Aorta (tissue), 5 donors: ENCODE measurements at regions of chr13 and their contacts with region 1.

Region 1: DNA sequence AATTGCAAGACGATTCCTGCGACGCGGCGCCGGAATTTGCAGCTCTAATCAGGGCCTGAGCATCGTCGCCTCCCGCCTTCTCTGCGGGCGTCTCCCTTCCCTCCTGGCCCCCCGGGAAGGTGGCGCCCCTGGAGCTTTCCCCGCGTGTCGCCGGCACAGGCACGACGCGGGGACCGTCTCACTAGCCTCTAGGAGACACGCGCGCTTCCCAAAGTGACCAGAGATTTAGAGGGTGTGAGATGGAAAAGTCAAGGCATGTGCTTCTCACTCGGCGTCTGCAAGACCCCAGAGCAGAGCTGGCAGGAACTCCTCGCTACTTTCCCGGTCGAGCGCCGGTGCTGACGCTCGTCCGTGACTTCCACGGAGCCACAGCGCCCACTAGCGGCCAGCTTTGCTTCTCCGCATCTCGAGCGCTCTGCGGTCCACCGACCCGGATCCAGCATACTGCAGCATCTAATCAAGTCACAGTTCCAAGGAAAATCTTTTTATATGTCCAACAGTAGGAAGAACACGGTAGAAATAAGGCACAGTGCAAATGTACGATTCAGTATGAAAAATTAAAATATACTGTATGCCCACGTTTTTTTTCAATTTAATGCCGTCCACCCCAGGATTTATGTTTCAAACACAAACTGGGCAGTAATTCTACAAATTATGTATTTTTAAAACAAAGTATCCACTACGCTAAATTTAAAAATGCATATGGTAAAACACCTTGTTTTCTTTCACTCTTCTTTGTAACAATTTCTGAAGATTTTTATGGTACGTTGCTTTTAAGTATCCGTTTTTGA is 977 bp upstream of the EFNB2 start:
- DNase-seq: peak; percentile 92 to 99
- ATAC-seq: peak; percentile 87
- H3K4me3 ChIP-seq: peak overlapping the region; percentile 43 to 99
- H3K27ac ChIP-seq: peak overlapping the region in 1 of 2 donors; percentile 7
- H3K4me1 ChIP-seq: no peaks in the 10 kb centered on the region
- H3K27me3 ChIP-seq: no peaks in the 10 kb centered on the region

Region 2: DNA sequence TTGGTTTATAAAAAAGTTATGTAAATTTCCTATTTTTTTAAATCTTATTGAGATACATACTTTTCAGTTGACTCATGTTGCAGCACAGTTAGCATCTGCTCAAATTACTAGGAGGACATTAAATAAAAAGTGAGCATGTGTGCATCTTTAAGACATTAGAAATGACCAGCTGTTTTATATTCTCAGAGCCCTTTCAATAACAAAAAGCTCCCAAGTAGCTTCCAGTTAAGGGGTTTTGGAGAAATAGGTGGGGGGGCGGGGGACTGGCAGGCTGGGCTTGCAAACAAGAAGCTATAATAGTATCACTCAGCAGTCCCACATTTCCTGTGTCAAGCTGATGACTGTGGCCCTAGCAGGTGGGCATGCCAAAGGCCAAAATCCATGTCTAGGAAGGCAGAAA is 1757.1 kb before region 1 on chr13:
- intact Hi-C with region 1: loop called in 1 of 2 experiments (anchors 5 kb)
- DNase-seq: no peak
- ATAC-seq: no peak
- H3K4me3 ChIP-seq: no peak overlapping the region
- H3K27ac ChIP-seq: no peak overlapping the region
- H3K4me1 ChIP-seq: no peaks in the 10 kb centered on the region
- H3K27me3 ChIP-seq: no peaks in the 10 kb centered on the region

Region 3: GRCh38 chr13:105627270-105627669 is 909.2 kb before region 1 on chr13:
- intact Hi-C with region 1: loop called in 1 of 2 experiments (anchors 10 kb)
- DNase-seq: peak in 1 of 2 donors; percentile 27
- ATAC-seq: peak; percentile 60
- H3K4me3 ChIP-seq: peak overlapping the region in 1 of 2 donors; percentile 26
- H3K27ac ChIP-seq: peak overlapping the region in 1 of 2 donors; percentile 45
- H3K4me1 ChIP-seq: no peaks in the 10 kb centered on the region
- H3K27me3 ChIP-seq: no peaks in the 10 kb centered on the region

Region 4: GRCh38 chr13:105918842-105919741 is 617.3 kb before region 1 on chr13:
- intact Hi-C with region 1: loop called in 1 of 2 experiments (anchors 10 kb)
- DNase-seq: peak in 1 of 2 donors; percentile 45
- ATAC-seq: no peak
- H3K4me3 ChIP-seq: no peak overlapping the region
- H3K27ac ChIP-seq: no peak overlapping the region
- H3K4me1 ChIP-seq: no peaks in the 10 kb centered on the region
- H3K27me3 ChIP-seq: no peaks in the 10 kb centered on the region

Region 5: GRCh38 chr13:106381091-106381490 is 155.3 kb before region 1 on chr13:
- intact Hi-C with region 1: no loop called
- DNase-seq: no peak
- ATAC-seq: no peak
- H3K4me3 ChIP-seq: no peak overlapping the region
- H3K27ac ChIP-seq: no peak overlapping the region
- H3K4me1 ChIP-seq: no peaks in the 10 kb centered on the region
- H3K27me3 ChIP-seq: no peaks in the 10 kb centered on the region

Region 6: GRCh38 chr13:106619688-106620555 is 83.5 kb after region 1 on chr13:
- intact Hi-C with region 1: loop called in 1 of 2 experiments (anchors 5 kb)
- DNase-seq: no peak
- ATAC-seq: peak; percentile 91
- H3K4me3 ChIP-seq: no peak overlapping the region
- H3K27ac ChIP-seq: no peak overlapping the region
- H3K4me1 ChIP-seq: no peaks in the 10 kb centered on the region
- H3K27me3 ChIP-seq: no peaks in the 10 kb centered on the region